ENCODE measurements at regions of chr6 and their contacts with region 1.

Region 1: DNA sequence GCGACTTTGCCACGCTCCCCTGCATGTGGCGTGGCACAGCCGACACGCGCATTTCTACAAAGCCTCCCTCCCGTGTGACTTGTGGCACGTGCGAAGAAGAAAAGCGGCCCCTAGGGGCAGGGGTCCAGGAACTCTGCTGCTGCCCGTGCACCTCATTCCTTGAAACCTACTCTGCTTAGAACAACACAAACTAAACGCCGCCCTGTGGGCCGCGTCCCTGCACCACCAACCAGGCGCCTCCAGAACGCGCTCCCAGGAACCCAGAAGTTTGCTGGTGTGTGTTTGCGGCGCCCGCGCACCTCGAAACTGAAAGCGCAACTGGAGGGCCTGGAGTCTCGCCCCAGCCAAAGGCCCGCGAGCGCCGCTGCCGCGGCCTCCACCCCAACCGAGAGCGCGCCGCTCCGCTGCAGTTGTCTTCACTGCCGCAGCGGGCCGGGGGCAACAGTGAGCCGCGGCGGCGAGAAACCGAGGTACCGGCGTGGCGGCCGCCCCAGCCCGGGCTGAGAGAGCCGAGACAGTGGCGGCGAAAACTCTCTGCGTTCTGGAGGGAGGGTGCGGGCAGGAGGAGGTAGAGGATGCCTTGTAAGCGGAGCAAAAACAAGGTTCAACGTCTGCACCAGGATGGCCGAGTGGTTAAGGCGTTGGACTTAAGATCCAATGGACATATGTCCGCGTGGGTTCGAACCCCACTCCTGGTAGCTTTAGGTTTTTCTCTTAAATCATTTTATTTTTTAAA is 65.8 kb downstream of the STX11 start:
- DNase-seq: peak; percentile 91 to 98 (median 94)
- ATAC-seq: peak; percentile 89 to 95 (median 91)
- H3K4me3 ChIP-seq: peak overlapping the region; percentile 43 to 66 (median 48)
- H3K27ac ChIP-seq: peak overlapping the region; percentile 56 to 97 (median 91)
- H3K4me1 ChIP-seq: peaks cover 0 to 14% (median 4%) of the 10 kb centered on the region in 3 donors
- H3K27me3 ChIP-seq: no peaks in the 10 kb centered on the region
- CTCF ChIP-seq: peak; percentile 41 to 81 (median 72)

Region 2: DNA sequence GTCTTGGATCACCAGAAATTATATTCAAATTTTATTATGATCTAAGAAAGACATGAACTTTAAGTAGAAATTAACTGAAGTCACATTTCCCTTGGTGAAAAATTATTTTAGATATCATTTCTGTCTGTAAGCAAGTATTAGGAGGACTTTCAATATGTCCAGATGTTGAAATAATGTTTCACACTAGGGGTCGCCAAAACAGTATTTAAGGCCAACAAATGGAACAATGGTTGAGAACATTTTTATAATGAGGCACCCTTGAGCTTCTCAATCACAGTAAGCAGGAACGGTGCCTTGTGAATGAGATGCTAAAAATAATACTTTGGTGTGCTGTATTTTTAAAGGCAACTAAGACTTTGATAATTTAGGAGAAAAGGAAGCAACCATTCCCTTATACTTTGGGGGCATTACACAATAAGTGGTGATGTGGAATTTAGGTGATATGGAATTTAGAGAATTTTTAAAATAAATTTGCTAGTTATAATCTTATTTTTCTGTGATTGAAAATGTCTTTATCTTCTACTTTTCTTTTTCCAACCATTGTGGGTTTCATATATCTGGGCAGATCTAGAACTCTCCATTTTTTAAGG is 111.1 kb before region 1 on chr6:
- intact Hi-C with region 1: loop called in 2 of 3 experiments (anchors 10 kb)
- DNase-seq: peak in 3 of 6 donors; percentile 8 to 24 (median 20)
- ATAC-seq: peak; percentile 72 to 91 (median 90)
- H3K4me3 ChIP-seq: no peak overlapping the region
- H3K27ac ChIP-seq: no peak overlapping the region
- H3K4me1 ChIP-seq: no peaks in the 10 kb centered on the region
- H3K27me3 ChIP-seq: no peaks in the 10 kb centered on the region
- CTCF ChIP-seq: peak in 3 of 4 donors; percentile 33 to 43 (median 35)

Region 3: GRCh38 chr6:144119376-144119775 is 96.7 kb before region 1 on chr6:
- intact Hi-C with region 1: loop called in 1 of 3 experiments (anchors 10 kb)
- DNase-seq: no peak
- ATAC-seq: no peak
- H3K4me3 ChIP-seq: no peak overlapping the region
- H3K27ac ChIP-seq: no peak overlapping the region
- H3K4me1 ChIP-seq: peaks cover 0 to 3% (median 0%) of the 10 kb centered on the region in 3 donors
- H3K27me3 ChIP-seq: no peaks in the 10 kb centered on the region
- CTCF ChIP-seq: no peak

Measured in pancreas (tissue), 10 donors.